Endothelial cell of umbilical vein (primary cell): ENCODE measurements at regions of chr11 and their contacts with region 1.

Region 1: GRCh38 chr11:23932485-23932898 is 564.4 kb upstream of the LUZP2 start:
- DNase-seq: peak; percentile 82
- H3K4me3 ChIP-seq: no peak overlapping the region
- H3K27ac ChIP-seq: peak overlapping the region; percentile 76
- H3K4me1 ChIP-seq: peaks cover 20% of the 10 kb centered on the region
- H3K27me3 ChIP-seq: no peaks in the 10 kb centered on the region
- CTCF ChIP-seq: no peak
- POLR2A ChIP-seq: no peak

Region 2: DNA sequence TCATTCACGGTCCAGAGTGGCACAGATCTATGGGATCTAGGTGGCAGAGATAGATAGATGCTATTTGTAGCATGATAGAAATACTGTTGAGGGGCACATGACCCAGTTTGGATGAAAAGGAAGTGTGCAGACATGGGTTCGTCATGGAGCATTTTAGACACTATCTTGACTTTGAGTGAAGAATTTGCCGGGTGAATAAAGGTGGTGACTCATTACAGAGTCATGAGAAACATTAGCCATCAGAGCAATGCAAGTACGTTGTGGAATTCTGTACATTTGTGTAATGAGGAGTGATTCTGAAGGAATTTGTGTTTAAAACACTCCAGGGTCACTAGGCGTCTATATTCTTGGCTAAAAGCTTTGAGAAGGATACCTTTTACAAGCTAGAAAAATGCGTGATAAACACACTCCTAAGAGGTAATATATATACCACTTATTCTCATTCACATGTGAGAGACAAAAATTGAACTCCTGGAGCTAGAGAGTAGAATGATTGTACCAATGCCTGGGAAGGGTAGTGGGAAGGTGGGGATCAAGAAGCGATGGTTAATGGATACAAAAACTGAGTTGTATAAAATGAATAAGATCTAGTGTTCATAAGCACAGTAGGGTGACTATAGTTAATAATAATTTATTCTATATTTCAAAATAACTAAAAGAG is 29.3 kb before region 1 on chr11:
- CTCF ChIA-PET with region 1: no interaction called
- POLR2A ChIA-PET with region 1: no interaction called
- dilution Hi-C with region 1: no loop called
- intact Hi-C with region 1: loop called (anchors 1 kb)
- DNase-seq: peak; percentile 82
- H3K4me3 ChIP-seq: no peak overlapping the region
- H3K27ac ChIP-seq: peak overlapping the region; percentile 62
- H3K4me1 ChIP-seq: peaks cover 12% of the 10 kb centered on the region
- H3K27me3 ChIP-seq: no peaks in the 10 kb centered on the region
- CTCF ChIP-seq: no peak
- POLR2A ChIP-seq: no peak